Activated CD4-positive, alpha-beta memory T cell treated with anti-CD3 and anti-CD28 coated beads for 36 hours (primary cell): ENCODE measurements at regions of chr3 and their contacts with region 1.

Region 1: GRCh38 chr3:15268033-15268631 is 62.1 kb downstream of the CAPN7 start:
- DNase-seq: peak; percentile 91
- H3K4me3 Mint-ChIP-seq: no peak overlapping the region
- H3K27ac Mint-ChIP-seq: peak overlapping the region; percentile 65
- H3K4me1 Mint-ChIP-seq: peaks cover 79% of the 10 kb centered on the region
- H3K27me3 Mint-ChIP-seq: no peaks in the 10 kb centered on the region

Region 2: GRCh38 chr3:14803101-14803980 is 464.8 kb before region 1 on chr3:
- CTCF ChIA-PET with region 1: no interaction called
- POLR2A ChIA-PET with region 1: no interaction called
- intact Hi-C with region 1: no loop called
- DNase-seq: peak; percentile 20
- H3K4me3 Mint-ChIP-seq: no peak overlapping the region
- H3K27ac Mint-ChIP-seq: no peak overlapping the region
- H3K4me1 Mint-ChIP-seq: peaks cover 8% of the 10 kb centered on the region
- H3K27me3 Mint-ChIP-seq: peaks cover 9% of the 10 kb centered on the region

Region 3: GRCh38 chr3:15215996-15216395 is 52.1 kb before region 1 on chr3:
- CTCF ChIA-PET with region 1: no interaction called
- POLR2A ChIA-PET with region 1: no interaction called
- intact Hi-C with region 1: no loop called
- DNase-seq: no peak
- H3K4me3 Mint-ChIP-seq: no peak overlapping the region
- H3K27ac Mint-ChIP-seq: no peak overlapping the region
- H3K4me1 Mint-ChIP-seq: peaks cover 13% of the 10 kb centered on the region
- H3K27me3 Mint-ChIP-seq: no peaks in the 10 kb centered on the region

Region 4: GRCh38 chr3:15300323-15301078 is 32.4 kb after region 1 on chr3:
- CTCF ChIA-PET with region 1: interaction called, 27 read pairs
- POLR2A ChIA-PET with region 1: interaction called, 5 read pairs
- intact Hi-C with region 1: loop called (anchors 2 kb)
- DNase-seq: peak; percentile 37
- H3K4me3 Mint-ChIP-seq: no peak overlapping the region
- H3K27ac Mint-ChIP-seq: peak overlapping the region; percentile 71
- H3K4me1 Mint-ChIP-seq: peaks cover 81% of the 10 kb centered on the region
- H3K27me3 Mint-ChIP-seq: no peaks in the 10 kb centered on the region

Region 5: DNA sequence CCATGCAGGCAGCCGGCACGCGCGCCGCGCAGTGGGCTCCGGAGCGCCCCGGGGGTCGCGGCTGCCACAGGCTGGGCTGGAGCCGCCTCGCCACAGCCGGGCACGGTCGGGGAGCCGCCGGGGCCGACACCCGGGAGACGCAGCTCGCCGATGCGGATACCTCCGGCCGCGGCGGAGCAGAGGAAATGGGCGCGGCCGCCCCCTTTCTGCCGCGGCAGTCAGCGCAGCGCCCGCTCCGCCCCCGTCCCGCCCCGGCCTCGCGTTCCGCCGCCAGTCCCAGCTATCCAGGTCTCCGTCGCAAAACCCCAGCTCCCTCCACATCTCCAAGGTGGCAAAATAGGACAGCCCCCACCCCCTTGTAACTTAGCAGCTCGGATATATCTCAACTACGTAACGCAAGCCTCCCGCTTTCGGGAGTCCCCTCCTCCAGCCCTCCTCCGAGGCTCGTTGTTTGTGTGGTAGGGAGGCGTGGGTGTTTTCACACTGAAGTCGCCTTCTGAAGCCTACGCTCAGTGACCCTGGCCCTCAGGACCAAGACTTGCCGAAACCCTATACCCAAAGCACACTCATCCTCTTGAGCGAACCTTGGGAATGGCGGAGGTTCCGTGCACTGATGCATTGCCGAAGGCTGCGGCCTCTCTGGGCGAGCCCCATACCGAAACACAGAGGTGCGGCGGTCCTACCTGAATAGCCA is 64.4 kb after region 1 on chr3 and contains the start of gene SH3BP5:
- CTCF ChIA-PET with region 1: interaction called, 123 read pairs
- POLR2A ChIA-PET with region 1: interaction called, 8 read pairs
- intact Hi-C with region 1: loop called (anchors 1 kb)
- DNase-seq: peak; percentile 82
- H3K4me3 Mint-ChIP-seq: peak within 1 kb of the TSS; percentile 83
- H3K27ac Mint-ChIP-seq: peak within 1 kb of the TSS; percentile 78
- H3K4me1 Mint-ChIP-seq: peaks cover 54% of the 10 kb centered on the region
- H3K27me3 Mint-ChIP-seq: no peaks in the 10 kb centered on the region
- total RNA-seq, gene SH3BP5: 33.6 to 37.5 TPM

Region 6: DNA sequence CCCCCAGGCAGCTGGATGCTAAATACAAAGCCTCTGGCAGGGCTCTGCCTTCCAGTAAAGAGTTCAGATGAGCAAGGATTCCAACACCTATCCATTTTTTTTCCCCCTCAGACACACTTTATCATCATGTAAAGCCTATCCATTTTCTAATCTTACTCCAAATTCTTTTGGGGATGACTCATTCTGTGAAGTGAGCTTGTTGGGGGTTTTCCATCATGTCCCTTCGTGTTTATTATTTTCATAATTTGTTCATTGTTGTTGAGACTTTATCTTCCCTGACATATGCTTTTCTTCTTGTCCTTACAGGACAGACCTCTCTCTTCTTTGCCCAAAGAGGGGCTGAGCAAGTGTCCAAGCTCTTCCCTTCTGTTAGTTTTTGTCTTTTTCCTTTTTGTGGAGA is 98.9 kb after region 1 on chr3:
- CTCF ChIA-PET with region 1: interaction called, 46 read pairs
- POLR2A ChIA-PET with region 1: interaction called, 17 read pairs
- intact Hi-C with region 1: no loop called
- DNase-seq: no peak
- H3K4me3 Mint-ChIP-seq: no peak overlapping the region
- H3K27ac Mint-ChIP-seq: peak overlapping the region; percentile 39
- H3K4me1 Mint-ChIP-seq: peaks cover 30% of the 10 kb centered on the region
- H3K27me3 Mint-ChIP-seq: no peaks in the 10 kb centered on the region

Region 7: GRCh38 chr3:15405448-15406050 is 137.4 kb after region 1 on chr3:
- CTCF ChIA-PET with region 1: interaction called, 178 read pairs
- POLR2A ChIA-PET with region 1: interaction called, 12 read pairs
- intact Hi-C with region 1: loop called (anchors 1 kb)
- DNase-seq: no peak
- H3K4me3 Mint-ChIP-seq: no peak overlapping the region
- H3K27ac Mint-ChIP-seq: no peak overlapping the region
- H3K4me1 Mint-ChIP-seq: peaks cover 3% of the 10 kb centered on the region
- H3K27me3 Mint-ChIP-seq: no peaks in the 10 kb centered on the region